ENCODE measurements at regions of chr14 and their contacts with region 1.

Region 1: GRCh38 chr14:93788543-93789227 is 400 bp upstream of the PRIMA1 start:
- DNase-seq: no peak
- ATAC-seq: peak; percentile 89
- H3K4me3 ChIP-seq: peak overlapping the region; percentile 38 to 43
- H3K27ac ChIP-seq: no peak overlapping the region
- H3K4me1 ChIP-seq: no peaks in the 10 kb centered on the region
- H3K27me3 ChIP-seq: no peaks in the 10 kb centered on the region; the same call in 1 of the 2 replicates
- CTCF ChIP-seq: peak; percentile 49

Region 2: DNA sequence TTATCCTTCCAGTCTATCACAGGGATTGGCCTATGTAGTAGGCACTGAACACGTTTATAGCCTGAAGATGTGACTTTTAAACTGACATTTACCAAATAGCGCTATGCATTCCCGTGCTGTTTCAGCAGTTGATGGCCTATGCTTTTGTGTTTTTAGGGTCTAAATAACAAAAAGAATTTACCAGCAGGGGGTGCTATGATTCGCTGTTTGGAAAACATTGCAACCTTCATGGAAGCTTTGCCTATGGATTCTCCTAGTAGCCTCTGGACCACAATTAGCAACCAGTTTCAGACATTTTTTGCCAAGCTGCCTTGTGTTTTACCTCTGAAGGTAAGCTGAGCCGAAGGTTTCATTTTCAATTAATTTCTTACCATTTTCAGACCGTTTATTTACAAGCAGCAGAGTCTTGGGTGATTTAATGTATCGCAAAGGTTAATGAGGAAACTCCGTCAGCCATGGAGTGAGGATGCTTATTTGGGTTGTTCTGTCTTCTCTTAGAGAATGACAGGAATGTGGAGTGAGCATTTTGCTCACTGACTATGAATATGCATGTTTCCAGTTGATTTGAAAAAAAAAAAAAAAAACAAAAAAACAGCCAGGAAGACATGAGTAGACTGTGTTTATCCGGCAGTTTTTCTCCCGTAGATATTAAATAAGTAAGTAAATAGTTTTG is 133.5 kb before region 1 on chr14:
- CTCF ChIA-PET with region 1: no interaction called
- POLR2A ChIA-PET with region 1: no interaction called
- in situ Hi-C with region 1: no loop called
- intact Hi-C with region 1: loop called (anchors 10 kb)
- DNase-seq: peak; percentile 27
- ATAC-seq: peak; percentile 75; the same call in 1 of the 2 replicates
- H3K4me3 ChIP-seq: no peak overlapping the region
- H3K27ac ChIP-seq: no peak overlapping the region
- H3K4me1 ChIP-seq: no peaks in the 10 kb centered on the region
- H3K27me3 ChIP-seq: no peaks in the 10 kb centered on the region; the same call in 1 of the 2 replicates
- CTCF ChIP-seq: peak; percentile 67

Region 3: DNA sequence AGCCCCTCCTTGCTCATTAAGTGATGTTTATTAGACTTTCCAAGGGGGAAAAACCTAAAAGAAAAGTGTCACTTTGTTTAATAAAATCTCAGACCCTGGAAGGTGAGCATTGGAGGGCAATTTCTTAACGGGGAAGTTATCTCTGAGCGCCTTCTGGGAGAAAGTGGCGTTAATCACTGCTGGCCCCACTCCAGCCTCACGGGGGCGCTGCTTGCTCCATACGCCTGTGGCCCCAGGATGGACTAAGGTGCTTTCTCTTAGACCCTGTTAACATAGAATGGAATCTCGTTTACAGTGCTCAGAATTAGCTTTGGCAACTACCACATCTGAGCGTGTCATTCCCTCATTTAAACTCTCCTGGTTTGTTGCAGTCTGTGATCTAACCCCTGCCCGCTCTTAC is 16.0 kb after region 1 on chr14:
- CTCF ChIA-PET with region 1: no interaction called
- POLR2A ChIA-PET with region 1: no interaction called
- in situ Hi-C with region 1: no loop called
- intact Hi-C with region 1: no loop called
- DNase-seq: no peak
- ATAC-seq: no peak
- H3K4me3 ChIP-seq: no peak overlapping the region
- H3K27ac ChIP-seq: no peak overlapping the region
- H3K4me1 ChIP-seq: no peaks in the 10 kb centered on the region
- H3K27me3 ChIP-seq: no peaks in the 10 kb centered on the region
- CTCF ChIP-seq: peak; percentile 33